ENCODE measurements at regions of chr14 and their contacts with region 1.

Region 1: DNA sequence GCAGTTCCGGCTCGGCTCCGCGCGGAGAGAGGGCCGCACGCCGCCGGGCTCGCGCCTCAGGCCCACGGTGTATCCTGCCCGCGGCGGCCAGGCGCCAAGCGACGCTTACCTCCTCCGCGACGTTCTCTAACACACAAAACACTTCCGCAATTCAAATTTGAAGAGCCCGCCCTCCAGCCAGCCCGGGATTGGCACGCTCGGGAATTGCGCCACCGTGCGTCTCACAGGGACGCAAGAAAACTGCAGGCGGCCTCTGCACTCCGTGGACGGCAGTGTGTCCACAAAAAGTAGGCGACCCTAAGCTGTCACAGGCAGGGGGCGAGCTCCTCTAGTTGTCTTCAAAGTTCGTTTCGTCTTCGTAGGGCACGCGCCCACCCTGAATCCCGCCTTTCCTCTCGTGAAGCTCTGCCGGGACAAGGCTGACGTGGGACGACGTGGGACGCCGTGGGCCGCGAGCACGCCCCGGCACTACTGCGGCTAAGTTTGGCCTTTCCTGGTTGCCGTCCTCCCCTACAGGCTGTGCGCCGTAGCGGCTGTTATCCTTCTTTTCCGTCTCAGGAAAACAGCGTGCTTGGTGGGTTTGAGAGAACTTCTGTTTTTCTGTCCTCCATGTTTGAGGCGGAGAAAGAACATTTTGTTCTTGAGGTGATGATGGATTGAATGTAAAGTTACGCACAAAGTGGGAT is at the start of gene MIS18BP1:
- DNase-seq: peak; percentile 76
- H3K4me3 ChIP-seq: peak within 1 kb of the TSS; percentile 86
- CTCF ChIP-seq: peak; percentile 65

Region 2: GRCh38 chr14:45199230-45199629 is 54.0 kb before region 1 on chr14:
- CTCF ChIA-PET with region 1: interaction called, 11 read pairs
- POLR2A ChIA-PET with region 1: no interaction called
- DNase-seq: peak; percentile 36
- H3K4me3 ChIP-seq: no peak overlapping the region
- CTCF ChIP-seq: no peak

Region 3: DNA sequence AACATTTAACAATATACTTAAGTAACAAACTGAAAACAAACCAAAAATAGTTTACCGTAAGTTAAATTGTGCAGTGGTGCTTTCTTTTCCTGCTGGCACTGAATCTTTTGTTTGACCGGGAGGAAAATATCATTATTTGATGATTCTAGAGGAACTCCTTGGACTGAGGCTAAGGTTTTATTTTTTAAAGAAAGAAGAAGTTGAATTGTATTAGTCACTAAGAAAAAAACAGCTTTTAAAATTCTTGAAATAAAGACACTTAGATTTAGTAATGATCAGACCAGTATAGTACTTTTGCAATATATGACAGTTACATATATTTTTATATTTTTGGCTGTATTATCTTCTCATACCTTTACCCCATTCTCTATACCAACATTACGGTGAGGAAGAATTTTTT is 10.5 kb before region 1 on chr14:
- CTCF ChIA-PET with region 1: interaction called, 13 read pairs
- POLR2A ChIA-PET with region 1: no interaction called
- DNase-seq: no peak
- H3K4me3 ChIP-seq: no peak overlapping the region
- CTCF ChIP-seq: no peak